ENCODE measurements at regions of chr6 and their contacts with region 1.

Region 1: GRCh38 chr6:125191916-125192609 is 38.5 kb downstream of the TPD52L1 start:
- DNase-seq: peak; percentile 68
- ATAC-seq: peak; percentile 97
- H3K4me3 Mint-ChIP-seq: no peak overlapping the region
- H3K27ac Mint-ChIP-seq: no peak overlapping the region
- H3K4me1 Mint-ChIP-seq: peaks cover 19% of the 10 kb centered on the region
- H3K27me3 Mint-ChIP-seq: no peaks in the 10 kb centered on the region
- CTCF ChIP-seq: peak; percentile 71

Region 2: GRCh38 chr6:125153391-125154117 is 38.5 kb before region 1 on chr6 and contains the start of gene TPD52L1:
- CTCF ChIA-PET with region 1: interaction called, 10 read pairs
- POLR2A ChIA-PET with region 1: no interaction called
- DNase-seq: peak; percentile 83
- ATAC-seq: peak; percentile 90
- H3K4me3 Mint-ChIP-seq: peak within 1 kb of the TSS; percentile 83
- H3K27ac Mint-ChIP-seq: no peak within 1 kb of the TSS
- H3K4me1 Mint-ChIP-seq: peaks cover 25% of the 10 kb centered on the region
- H3K27me3 Mint-ChIP-seq: peaks cover 47% of the 10 kb centered on the region
- CTCF ChIP-seq: peak; percentile 52; the same call in 1 of the 2 replicates
- total RNA-seq, gene TPD52L1: 12.4 to 17.7 TPM (median 15.0 TPM) in 3 replicates

Region 3: DNA sequence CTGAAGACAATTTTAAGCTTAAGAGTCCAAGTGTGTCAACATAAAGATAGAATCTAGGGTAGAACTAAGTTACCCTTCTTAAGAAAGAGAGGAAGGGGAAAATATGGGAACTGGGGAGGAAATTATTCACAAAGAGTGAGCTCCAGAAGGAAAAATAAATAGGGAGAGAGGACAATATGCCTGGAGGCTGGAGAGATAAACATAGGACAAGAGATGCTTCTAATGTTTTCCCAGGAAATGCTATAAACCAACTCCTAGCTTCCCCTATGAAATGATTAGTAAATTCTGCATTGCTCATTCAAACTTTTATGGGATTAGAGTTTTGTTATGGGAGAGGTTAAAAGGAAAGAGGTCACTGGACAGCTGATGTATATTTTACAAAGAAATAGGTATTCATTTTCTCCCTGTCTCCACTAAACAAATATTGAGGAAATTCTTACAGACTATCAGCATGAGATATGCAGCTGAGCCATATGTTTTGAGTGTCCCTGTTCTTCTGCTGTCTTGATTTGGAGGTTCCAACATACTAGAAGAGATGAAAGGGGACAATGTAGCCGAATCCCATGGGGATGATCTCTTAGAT is 16.5 kb before region 1 on chr6:
- CTCF ChIA-PET with region 1: interaction called, 17 read pairs
- POLR2A ChIA-PET with region 1: no interaction called
- DNase-seq: no peak
- ATAC-seq: no peak
- H3K4me3 Mint-ChIP-seq: no peak overlapping the region
- H3K27ac Mint-ChIP-seq: no peak overlapping the region
- H3K4me1 Mint-ChIP-seq: peaks cover 1% of the 10 kb centered on the region
- H3K27me3 Mint-ChIP-seq: no peaks in the 10 kb centered on the region
- CTCF ChIP-seq: no peak

Region 4: GRCh38 chr6:125201961-125202591 is 10.0 kb after region 1 on chr6:
- CTCF ChIA-PET with region 1: interaction called, 22 read pairs
- POLR2A ChIA-PET with region 1: no interaction called
- DNase-seq: no peak
- ATAC-seq: no peak
- H3K4me3 Mint-ChIP-seq: no peak overlapping the region
- H3K27ac Mint-ChIP-seq: peak overlapping the region; percentile 42; the same call in 1 of the 2 replicates
- H3K4me1 Mint-ChIP-seq: peaks cover 32% of the 10 kb centered on the region
- H3K27me3 Mint-ChIP-seq: no peaks in the 10 kb centered on the region
- CTCF ChIP-seq: no peak

Region 5: GRCh38 chr6:125332664-125333063 is 140.6 kb after region 1 on chr6:
- CTCF ChIA-PET with region 1: no interaction called
- POLR2A ChIA-PET with region 1: no interaction called
- DNase-seq: no peak
- ATAC-seq: no peak
- H3K4me3 Mint-ChIP-seq: no peak overlapping the region
- H3K27ac Mint-ChIP-seq: no peak overlapping the region
- H3K4me1 Mint-ChIP-seq: no peaks in the 10 kb centered on the region
- H3K27me3 Mint-ChIP-seq: peaks cover 3% of the 10 kb centered on the region; the same call in 1 of the 2 replicates
- CTCF ChIP-seq: no peak

Region 6: DNA sequence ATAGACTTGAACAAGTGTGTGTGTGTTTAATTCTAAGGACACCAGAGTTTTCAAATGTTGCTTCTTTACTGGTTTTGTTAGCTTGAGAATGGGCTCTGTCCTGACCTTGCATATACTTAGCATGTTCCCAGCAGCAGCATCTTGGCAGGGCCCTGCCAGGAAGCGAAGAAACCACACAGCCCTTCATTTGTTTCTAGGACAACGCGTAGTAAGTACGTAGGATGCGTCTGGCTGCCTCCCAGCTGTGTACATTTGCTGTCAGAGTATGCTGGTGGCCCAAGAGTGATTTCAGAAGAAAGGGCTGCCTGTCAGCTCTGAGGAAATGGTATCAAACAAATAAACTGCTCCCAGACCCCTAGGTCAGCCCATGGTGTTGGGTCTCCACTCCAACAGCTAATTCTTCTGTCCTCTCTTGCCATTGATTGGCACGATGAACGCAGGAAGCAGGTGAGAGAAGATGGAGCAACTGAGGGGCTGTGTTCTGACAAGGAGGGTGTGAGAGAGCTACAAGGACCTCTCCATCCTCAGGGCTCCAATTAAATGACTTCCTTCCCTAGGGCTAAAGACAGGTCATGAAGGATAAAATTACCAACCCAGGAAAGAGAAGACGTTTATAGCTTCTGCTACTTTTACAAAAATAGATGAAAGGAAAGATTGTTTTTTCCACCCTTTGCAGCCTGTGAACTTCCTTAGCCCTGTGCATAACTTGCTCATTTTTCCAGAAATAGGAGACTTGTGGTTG is 165.6 kb after region 1 on chr6:
- CTCF ChIA-PET with region 1: no interaction called
- POLR2A ChIA-PET with region 1: no interaction called
- DNase-seq: no peak
- ATAC-seq: no peak
- H3K4me3 Mint-ChIP-seq: no peak overlapping the region
- H3K27ac Mint-ChIP-seq: no peak overlapping the region
- H3K4me1 Mint-ChIP-seq: peaks cover 29% of the 10 kb centered on the region
- H3K27me3 Mint-ChIP-seq: peaks cover 10% of the 10 kb centered on the region
- CTCF ChIP-seq: no peak